ENCODE measurements at regions of chr12 and their contacts with region 1.

Region 1: DNA sequence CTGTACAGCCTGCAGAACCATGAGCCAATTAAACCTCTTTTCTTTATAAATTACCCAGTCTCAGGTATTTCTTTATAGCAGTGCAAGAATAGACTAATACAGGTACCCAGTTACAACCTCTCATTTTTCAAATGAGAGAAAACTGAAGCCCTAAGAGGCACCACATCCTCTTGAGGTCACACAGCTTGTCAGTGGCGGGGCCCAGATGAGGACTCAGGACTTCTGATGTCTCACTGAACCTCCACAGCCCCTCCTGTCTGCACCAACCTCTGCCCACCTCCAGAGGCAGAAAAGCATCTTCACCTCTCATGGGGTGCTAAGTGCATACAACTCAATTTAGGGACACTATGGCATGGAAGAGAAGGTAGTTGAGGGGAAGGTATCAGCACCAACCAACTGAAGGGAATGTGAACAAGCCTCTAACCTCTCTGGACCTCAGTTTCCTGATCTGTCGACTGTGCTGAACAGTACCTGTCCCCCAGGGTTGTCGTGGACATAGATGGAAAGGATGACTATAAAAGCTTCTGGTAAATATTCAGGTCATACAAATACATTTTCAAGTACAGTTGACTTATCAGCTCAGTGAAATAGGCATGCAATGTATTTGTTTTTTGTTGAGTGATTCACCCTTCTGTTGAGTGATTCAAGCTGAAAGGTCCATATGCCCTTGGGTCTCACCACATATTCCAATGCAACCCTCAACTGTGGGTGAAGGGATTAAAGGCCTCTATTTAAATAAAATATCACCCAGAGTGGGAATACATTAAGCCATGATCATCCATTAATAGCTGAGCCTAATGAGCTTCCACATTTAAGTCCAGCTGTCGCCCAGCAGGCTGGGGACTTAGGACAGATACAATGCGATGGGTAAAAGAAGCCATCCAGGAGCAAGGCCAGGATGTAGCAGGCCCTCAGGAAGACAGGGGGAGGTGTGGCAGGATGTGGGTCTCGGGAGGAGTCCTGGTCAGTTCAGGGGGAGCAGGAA is 120.4 kb downstream of the CRACR2A start:
- DNase-seq: no peak
- H3K4me3 ChIP-seq: no peak overlapping the region
- H3K27ac ChIP-seq: no peak overlapping the region
- H3K4me1 ChIP-seq: no peaks in the 10 kb centered on the region
- H3K27me3 ChIP-seq: no peaks in the 10 kb centered on the region
- CTCF ChIP-seq: no peak
- POLR2A ChIP-seq: no peak

Region 2: DNA sequence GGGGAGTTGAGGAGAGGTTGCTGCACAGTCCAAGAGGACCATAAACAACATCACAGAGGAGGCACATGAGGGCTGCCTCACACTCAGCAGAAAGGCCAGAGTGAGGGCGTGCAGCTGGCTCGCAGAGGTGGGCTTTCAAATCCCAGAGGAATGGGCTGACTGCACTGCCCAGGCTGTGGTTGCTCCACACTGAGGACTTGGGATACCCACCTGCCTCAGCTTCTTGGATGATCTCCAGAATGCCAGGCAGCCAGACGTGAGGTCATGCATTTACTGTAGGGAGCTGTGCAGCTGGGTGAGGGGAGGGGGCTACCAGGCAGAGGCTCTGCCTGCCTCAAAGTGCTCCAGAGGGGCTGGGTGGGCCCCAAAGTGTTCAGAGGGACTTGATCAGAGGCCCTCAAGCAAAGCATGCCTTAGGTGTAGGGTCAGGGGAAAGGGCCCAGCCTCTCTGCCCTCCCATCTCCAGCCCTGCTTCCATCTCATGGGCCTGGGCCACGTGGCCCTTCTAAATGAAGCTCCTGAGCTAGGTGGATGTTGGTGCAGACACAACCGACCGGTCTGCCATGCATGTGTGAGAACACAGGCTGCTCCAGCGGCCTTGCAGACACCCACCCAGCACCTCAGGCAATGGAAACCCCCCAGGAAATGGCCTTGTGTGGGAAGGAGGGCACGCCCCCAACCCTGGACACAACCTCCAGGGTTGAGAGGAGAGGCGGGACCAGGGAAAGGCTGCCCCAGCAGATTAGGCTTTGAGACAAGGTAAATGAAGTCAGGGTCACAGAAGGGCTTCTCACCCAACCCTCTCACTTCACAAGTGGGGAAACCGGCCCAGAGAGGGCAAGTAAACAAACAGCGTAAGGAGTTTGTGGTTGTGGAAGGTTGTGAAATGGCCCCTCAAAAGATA is 1890.1 kb after region 1 on chr12:
- intact Hi-C with region 1: loop called (anchors 10 kb)
- DNase-seq: no peak
- H3K4me3 ChIP-seq: no peak overlapping the region
- H3K27ac ChIP-seq: no peak overlapping the region
- H3K4me1 ChIP-seq: no peaks in the 10 kb centered on the region
- H3K27me3 ChIP-seq: no peaks in the 10 kb centered on the region
- CTCF ChIP-seq: no peak
- POLR2A ChIP-seq: no peak